ENCODE measurements at regions of chr13 and their contacts with region 1.

Region 1: DNA sequence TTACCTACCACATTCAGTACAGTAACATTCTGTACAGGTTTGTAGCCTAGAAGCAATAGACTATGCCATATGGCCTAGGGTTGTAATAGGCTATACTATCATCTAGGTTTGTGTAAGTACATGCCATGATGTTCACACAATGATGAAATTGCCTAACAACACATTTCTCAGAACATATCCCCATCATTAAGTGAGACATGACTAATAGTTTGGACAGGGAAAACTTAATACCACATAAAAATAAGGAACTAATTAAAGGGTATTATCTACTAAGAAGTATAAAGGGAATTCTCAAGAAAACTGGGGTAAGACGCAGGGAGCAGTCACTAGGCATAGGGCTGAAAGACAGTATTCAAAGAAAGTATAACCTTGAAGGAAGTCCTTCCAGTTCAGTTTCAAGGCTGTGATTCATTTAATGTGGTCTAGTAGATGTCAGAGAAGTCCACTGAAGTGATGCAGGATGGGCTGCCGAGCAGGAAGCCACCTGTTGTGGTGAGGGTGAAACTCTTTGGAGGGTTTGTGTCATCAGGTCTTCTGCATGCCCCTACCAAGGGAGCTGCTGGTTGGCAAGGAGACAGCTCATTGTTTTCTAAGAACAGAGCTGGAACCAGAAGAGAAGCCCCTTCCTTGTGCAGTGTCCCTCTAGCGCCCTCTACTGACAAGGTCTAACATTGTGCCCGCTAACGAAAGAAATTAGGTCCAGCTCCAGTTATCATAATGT is 122.9 kb downstream of the OLFM4 start:
- DNase-seq: peak; percentile 71
- ATAC-seq: peak; percentile 99
- H3K4me3 Mint-ChIP-seq: no peak overlapping the region
- H3K27ac Mint-ChIP-seq: no peak overlapping the region
- H3K4me1 Mint-ChIP-seq: no peaks in the 10 kb centered on the region; the same call in 1 of the 2 replicates
- H3K27me3 Mint-ChIP-seq: no peaks in the 10 kb centered on the region
- CTCF ChIP-seq: peak; percentile 86

Region 2: DNA sequence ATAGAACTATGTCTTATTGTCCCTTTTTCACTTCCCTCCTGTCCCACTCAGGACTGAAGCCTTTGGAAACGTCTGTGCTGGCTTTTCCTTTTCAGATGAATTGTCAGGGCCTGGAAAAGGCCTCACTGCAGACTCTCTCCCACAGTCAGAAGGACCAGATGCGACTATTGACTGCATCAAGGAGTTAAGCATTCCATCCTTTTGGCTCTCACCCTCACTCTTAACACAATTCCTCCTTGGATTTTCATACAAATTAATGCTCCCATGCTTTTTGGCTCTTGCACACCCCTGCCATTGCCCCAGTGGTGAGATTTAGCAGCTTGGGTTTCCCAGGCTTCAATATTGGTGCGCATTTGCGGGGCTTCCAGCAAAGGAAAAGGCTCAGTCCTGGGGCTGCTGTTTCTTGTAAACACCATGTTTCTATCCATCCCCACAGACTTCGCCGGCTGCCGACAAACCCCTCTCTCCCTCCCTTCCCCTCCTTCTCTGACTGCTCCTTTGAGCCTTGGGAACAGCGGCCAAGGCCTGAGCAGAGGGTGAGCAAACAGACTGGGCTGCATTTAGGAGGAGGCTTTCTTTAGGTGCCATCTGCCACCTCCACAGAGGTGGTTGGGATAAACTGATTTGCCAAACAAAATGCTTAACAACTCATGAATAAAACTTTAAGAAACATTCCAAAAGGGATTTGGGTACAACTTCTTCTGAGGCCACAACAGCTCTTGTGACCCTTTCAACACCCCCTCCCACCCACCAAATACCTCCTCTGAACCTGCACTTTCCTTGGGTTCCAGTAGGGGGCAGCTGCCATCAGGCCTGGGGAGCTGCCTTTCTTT is 254.5 kb before region 1 on chr13:
- CTCF ChIA-PET with region 1: interaction called, 14 read pairs
- POLR2A ChIA-PET with region 1: no interaction called
- DNase-seq: peak; percentile 71
- ATAC-seq: peak; percentile 88
- H3K4me3 Mint-ChIP-seq: no peak overlapping the region
- H3K27ac Mint-ChIP-seq: no peak overlapping the region
- H3K4me1 Mint-ChIP-seq: peaks cover 58% of the 10 kb centered on the region
- H3K27me3 Mint-ChIP-seq: peaks cover 34% of the 10 kb centered on the region
- CTCF ChIP-seq: peak; percentile 90

Region 3: DNA sequence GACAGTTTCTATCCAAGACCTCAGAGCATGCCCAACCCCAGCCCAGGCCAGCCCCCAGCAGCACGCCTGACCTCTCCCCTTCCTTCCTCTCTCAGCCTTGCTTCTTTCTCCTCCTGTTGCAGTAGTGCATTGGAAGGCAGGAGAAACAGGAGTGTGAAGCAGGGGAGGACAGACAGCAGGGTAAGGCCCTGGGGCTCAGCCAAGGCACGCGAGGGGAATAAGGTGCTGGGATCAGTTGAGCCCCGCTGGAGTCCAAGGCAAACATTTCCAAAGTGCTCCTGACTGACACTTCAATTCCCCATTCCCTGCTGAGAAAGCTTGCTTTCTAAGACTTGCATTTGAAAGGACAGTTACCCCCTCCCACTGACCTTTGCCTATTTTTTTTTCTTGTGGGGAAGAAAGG is 196.0 kb before region 1 on chr13:
- CTCF ChIA-PET with region 1: interaction called, 10 read pairs
- POLR2A ChIA-PET with region 1: no interaction called
- DNase-seq: peak; percentile 53
- ATAC-seq: peak; percentile 88
- H3K4me3 Mint-ChIP-seq: peak overlapping the region; percentile 47
- H3K27ac Mint-ChIP-seq: peak overlapping the region; percentile 84
- H3K4me1 Mint-ChIP-seq: peaks cover 68% of the 10 kb centered on the region
- H3K27me3 Mint-ChIP-seq: peaks cover 41% of the 10 kb centered on the region
- CTCF ChIP-seq: no peak

Region 4: GRCh38 chr13:53068585-53069520 is 82.6 kb before region 1 on chr13:
- CTCF ChIA-PET with region 1: interaction called, 13 read pairs
- POLR2A ChIA-PET with region 1: no interaction called
- DNase-seq: no peak
- ATAC-seq: peak; percentile 56
- H3K4me3 Mint-ChIP-seq: no peak overlapping the region
- H3K27ac Mint-ChIP-seq: no peak overlapping the region
- H3K4me1 Mint-ChIP-seq: peaks cover 13% of the 10 kb centered on the region
- H3K27me3 Mint-ChIP-seq: no peaks in the 10 kb centered on the region
- CTCF ChIP-seq: no peak

Region 5: GRCh38 chr13:53092931-53093330 is 58.6 kb before region 1 on chr13:
- CTCF ChIA-PET with region 1: no interaction called
- POLR2A ChIA-PET with region 1: no interaction called
- DNase-seq: no peak
- ATAC-seq: no peak
- H3K4me3 Mint-ChIP-seq: no peak overlapping the region
- H3K27ac Mint-ChIP-seq: no peak overlapping the region
- H3K4me1 Mint-ChIP-seq: peaks cover 4% of the 10 kb centered on the region; the same call in 1 of the 2 replicates
- H3K27me3 Mint-ChIP-seq: 0 out of 2 replicates have a peak, but pooled peaks cover 2% of the 10 kb centered on the region
- CTCF ChIP-seq: no peak

Region 6: DNA sequence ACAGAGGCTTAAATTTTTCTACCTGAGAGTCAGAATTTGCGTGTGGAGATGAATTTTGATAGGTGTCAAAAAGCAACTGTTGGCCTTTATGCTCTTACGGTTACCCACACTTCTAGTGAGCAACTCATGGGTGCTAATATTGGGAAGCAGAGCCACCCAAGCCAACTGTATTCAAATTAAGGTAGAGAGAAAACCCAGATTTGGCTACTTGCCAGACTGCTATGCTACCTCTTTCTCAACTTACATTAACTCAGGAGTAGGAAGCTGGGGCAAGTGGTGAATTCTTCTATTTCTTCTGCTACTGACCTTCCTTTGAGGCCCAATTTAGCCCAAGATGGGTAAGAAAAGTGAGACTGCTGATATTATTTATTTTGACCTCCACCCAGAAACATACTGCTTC is 39.0 kb before region 1 on chr13:
- CTCF ChIA-PET with region 1: interaction called, 13 read pairs
- POLR2A ChIA-PET with region 1: no interaction called
- DNase-seq: no peak
- ATAC-seq: no peak
- H3K4me3 Mint-ChIP-seq: no peak overlapping the region
- H3K27ac Mint-ChIP-seq: no peak overlapping the region
- H3K4me1 Mint-ChIP-seq: no peaks in the 10 kb centered on the region
- H3K27me3 Mint-ChIP-seq: no peaks in the 10 kb centered on the region
- CTCF ChIP-seq: no peak

Region 7: DNA sequence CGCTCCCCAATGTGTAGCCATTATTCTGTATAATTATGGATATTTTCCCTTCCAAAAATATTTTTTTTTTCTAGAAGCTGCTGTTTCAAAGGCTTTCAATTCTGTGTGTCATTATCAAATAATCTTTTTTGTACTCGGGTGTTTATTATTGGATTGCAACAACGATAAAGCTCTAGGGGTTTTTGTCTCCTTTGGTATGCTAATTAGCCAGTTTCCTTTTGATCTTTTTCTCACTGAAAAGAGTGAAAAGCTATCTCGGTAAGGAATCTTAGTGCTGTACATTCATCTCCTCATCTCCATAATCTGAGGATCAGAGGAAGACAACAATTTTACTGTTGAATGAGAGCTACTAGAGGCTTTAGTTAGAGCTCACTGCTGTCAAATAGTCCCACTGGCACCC is 13.8 kb after region 1 on chr13:
- CTCF ChIA-PET with region 1: interaction called, 20 read pairs
- POLR2A ChIA-PET with region 1: no interaction called
- DNase-seq: no peak
- ATAC-seq: no peak
- H3K4me3 Mint-ChIP-seq: no peak overlapping the region
- H3K27ac Mint-ChIP-seq: no peak overlapping the region
- H3K4me1 Mint-ChIP-seq: peaks cover 32% of the 10 kb centered on the region
- H3K27me3 Mint-ChIP-seq: peaks cover 30% of the 10 kb centered on the region
- CTCF ChIP-seq: no peak

Region 8: GRCh38 chr13:53200498-53201453 is 49.3 kb after region 1 on chr13:
- CTCF ChIA-PET with region 1: interaction called, 42 read pairs
- POLR2A ChIA-PET with region 1: no interaction called
- DNase-seq: peak; percentile 90
- ATAC-seq: peak; percentile 78
- H3K4me3 Mint-ChIP-seq: peak overlapping the region; percentile 55
- H3K27ac Mint-ChIP-seq: no peak overlapping the region
- H3K4me1 Mint-ChIP-seq: no peaks in the 10 kb centered on the region
- H3K27me3 Mint-ChIP-seq: peaks cover 62% of the 10 kb centered on the region
- CTCF ChIP-seq: peak; percentile 92

Region 9: GRCh38 chr13:53411463-53411862 is 260.0 kb after region 1 on chr13:
- CTCF ChIA-PET with region 1: no interaction called
- POLR2A ChIA-PET with region 1: no interaction called
- DNase-seq: no peak
- ATAC-seq: no peak
- H3K4me3 Mint-ChIP-seq: no peak overlapping the region
- H3K27ac Mint-ChIP-seq: no peak overlapping the region
- H3K4me1 Mint-ChIP-seq: no peaks in the 10 kb centered on the region
- H3K27me3 Mint-ChIP-seq: no peaks in the 10 kb centered on the region
- CTCF ChIP-seq: no peak